ENCODE measurements at regions of chr3 and their contacts with region 1.

Region 1: DNA sequence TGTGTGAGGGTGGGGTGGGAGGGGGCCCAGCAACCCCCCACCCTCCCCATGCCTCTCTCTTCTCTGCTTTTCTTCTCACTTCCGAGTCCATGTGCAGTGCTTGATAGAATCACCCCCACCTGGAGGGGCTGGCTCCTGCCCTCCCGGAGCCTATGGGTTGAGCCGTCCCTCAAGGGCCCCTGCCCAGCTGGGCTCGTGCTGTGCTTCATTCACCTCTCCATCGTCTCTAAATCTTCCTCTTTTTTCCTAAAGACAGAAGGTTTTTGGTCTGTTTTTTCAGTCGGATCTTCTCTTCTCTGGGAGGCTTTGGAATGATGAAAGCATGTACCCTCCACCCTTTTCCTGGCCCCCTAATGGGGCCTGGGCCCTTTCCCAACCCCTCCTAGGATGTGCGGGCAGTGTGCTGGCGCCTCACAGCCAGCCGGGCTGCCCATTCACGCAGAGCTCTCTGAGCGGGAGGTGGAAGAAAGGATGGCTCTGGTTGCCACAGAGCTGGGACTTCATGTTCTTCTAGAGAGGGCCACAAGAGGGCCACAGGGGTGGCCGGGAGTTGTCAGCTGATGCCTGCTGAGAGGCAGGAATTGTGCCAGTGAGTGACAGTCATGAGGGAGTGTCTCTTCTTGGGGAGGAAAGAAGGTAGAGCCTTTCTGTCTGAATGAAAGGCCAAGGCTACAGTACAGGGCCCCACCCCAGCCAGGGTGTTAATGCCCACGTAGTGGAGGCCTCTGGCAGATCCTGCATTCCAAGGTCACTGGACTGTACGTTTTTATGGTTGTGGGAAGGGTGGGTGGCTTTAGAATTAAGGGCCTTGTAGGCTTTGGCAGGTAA is 8.1 kb downstream of the FAM131A start:
- H3K4me3 ChIP-seq: no peak overlapping the region
- H3K27ac ChIP-seq: no peak overlapping the region
- H3K4me1 ChIP-seq: no peaks in the 10 kb centered on the region
- CTCF ChIP-seq: peak; percentile 58; the same call in 1 of the 2 replicates

Region 2: GRCh38 chr3:184332370-184333090 is 13.0 kb before region 1 on chr3:
- CTCF ChIA-PET with region 1: no interaction called
- POLR2A ChIA-PET with region 1: no interaction called
- H3K4me3 ChIP-seq: no peak overlapping the region
- H3K27ac ChIP-seq: no peak overlapping the region
- H3K4me1 ChIP-seq: no peaks in the 10 kb centered on the region
- CTCF ChIP-seq: no peak

Region 3: DNA sequence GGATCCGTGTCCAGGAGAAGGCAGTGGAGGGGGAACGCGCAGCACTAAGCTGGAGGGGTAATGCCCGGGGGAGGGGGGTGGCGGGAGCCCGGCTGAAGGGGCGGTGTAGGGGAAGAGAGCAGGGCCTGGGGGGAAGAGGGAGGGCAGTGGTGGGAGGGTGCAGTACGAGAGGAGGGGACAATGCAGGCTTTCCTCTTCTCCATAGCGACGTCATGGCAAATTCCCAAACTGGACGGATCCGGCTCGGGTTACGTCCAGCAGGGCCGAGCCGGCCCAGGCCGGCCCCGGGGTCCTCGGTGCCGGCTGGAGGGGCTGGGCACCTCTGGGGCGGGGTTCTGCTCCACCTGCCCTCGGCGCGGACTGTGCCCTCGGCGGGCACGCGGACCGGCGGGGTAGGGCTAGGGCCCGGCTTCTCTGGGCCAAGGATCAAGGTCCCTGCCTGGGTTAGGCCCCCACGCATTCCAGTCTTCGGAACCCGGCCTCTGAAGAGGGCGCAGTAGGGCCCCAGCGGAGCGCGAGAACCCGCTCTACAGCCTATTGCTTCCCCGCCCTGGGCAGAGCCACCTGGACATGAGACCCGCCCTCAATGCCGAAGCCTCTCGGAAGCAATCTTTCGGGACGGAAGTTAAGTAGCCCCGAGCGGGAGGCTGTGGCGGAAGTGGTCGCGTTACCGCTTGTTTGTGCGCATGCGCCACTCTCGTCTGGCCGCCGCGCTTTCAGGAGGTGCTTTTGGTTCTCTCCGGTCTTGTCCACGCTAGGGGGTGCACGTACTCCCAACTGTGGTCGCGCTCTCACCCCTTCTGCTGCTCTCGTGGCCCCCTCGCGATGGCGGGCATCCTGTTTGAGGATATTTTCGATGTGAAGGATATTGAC is 17.4 kb after region 1 on chr3:
- CTCF ChIA-PET with region 1: interaction called, 13 read pairs
- POLR2A ChIA-PET with region 1: interaction called, 6 read pairs
- H3K4me3 ChIP-seq: peak overlapping the region; percentile 84
- H3K27ac ChIP-seq: peak overlapping the region; percentile 88
- H3K4me1 ChIP-seq: no peaks in the 10 kb centered on the region
- CTCF ChIP-seq: peak; percentile 97

Region 4: GRCh38 chr3:184490981-184491576 is 145.5 kb after region 1 on chr3:
- CTCF ChIA-PET with region 1: no interaction called
- POLR2A ChIA-PET with region 1: no interaction called
- H3K4me3 ChIP-seq: no peak overlapping the region
- H3K27ac ChIP-seq: no peak overlapping the region
- H3K4me1 ChIP-seq: no peaks in the 10 kb centered on the region
- CTCF ChIP-seq: no peak